ENCODE measurements at regions of chr18 and their contacts with region 1.

Region 1: GRCh38 chr18:6543330-6543908 is 128.7 kb upstream of the L3MBTL4 start:
- DNase-seq: no peak
- H3K4me3 ChIP-seq: no peak overlapping the region
- H3K27ac ChIP-seq: no peak overlapping the region
- H3K4me1 ChIP-seq: no peaks in the 10 kb centered on the region
- H3K27me3 ChIP-seq: no peaks in the 10 kb centered on the region
- CTCF ChIP-seq: peak; percentile 70; the same call in 1 of the 2 replicates

Region 2: DNA sequence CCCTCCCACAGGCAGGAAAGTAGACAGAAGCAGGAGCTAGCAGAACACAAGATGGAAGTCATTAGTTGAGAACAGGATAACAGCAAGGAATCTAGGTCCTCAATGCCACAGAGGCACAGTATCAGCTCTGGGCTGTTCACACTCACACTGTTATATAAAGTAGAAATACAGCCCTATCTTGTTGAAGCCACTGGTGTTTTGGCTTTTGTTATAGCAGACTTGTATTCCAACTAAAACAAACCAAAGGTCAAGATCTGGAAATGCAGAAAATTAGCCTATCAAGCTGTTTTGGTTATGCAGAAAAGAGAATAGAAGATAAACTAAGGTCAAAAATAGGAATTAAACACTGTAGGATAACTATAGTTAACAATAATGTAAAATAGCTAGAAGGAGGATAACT is 91.2 kb before region 1 on chr18:
- CTCF ChIA-PET with region 1: no interaction called
- POLR2A ChIA-PET with region 1: no interaction called
- intact Hi-C with region 1: no loop called
- DNase-seq: no peak
- H3K4me3 ChIP-seq: no peak overlapping the region
- H3K27ac ChIP-seq: no peak overlapping the region
- H3K4me1 ChIP-seq: no peaks in the 10 kb centered on the region
- H3K27me3 ChIP-seq: no peaks in the 10 kb centered on the region
- CTCF ChIP-seq: no peak

Region 3: GRCh38 chr18:6885992-6886796 is 342.8 kb after region 1 on chr18:
- CTCF ChIA-PET with region 1: no interaction called
- POLR2A ChIA-PET with region 1: no interaction called
- intact Hi-C with region 1: loop called (anchors 1 kb)
- DNase-seq: peak in 1 of 2 experiments; percentile 29
- H3K4me3 ChIP-seq: no peak overlapping the region
- H3K27ac ChIP-seq: no peak overlapping the region
- H3K4me1 ChIP-seq: no peaks in the 10 kb centered on the region
- H3K27me3 ChIP-seq: peaks cover 45% of the 10 kb centered on the region
- CTCF ChIP-seq: peak; percentile 76

Region 4: DNA sequence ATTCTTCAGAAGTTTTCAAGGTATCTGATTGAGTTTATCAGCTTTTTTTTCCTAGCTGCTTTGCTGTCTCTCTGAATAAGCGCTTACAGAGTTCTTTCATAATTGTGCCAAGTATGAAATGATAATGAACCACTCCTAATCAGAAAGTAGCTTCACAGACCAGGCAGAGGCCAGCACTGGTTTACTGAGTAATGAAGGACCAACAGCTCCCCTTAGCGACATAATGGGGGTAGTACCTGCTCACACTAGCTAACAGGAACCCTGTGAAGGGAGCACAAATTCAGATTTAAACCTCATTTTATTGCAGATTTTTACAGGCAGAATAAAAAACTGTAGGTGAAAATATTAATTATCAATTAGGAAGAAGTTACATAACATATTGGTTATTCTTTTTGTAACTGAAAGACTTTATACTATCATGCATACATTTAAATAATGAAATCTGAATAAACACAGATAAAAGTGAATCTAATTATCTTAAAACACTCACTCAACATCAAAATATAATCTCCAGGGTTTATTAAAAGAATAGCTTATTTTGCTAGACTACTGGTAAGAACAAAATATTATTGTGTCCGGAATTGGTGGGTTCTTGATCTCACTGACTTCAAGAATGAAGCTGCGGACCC is 633.8 kb after region 1 on chr18:
- CTCF ChIA-PET with region 1: no interaction called
- POLR2A ChIA-PET with region 1: no interaction called
- intact Hi-C with region 1: loop called (anchors 5 kb)
- DNase-seq: peak in 1 of 2 experiments; percentile 19
- H3K4me3 ChIP-seq: no peak overlapping the region
- H3K27ac ChIP-seq: no peak overlapping the region
- H3K4me1 ChIP-seq: no peaks in the 10 kb centered on the region
- H3K27me3 ChIP-seq: peaks cover 81% of the 10 kb centered on the region
- CTCF ChIP-seq: peak; percentile 68

Measured in PC-9 (cell line).